CD4-positive, alpha-beta memory T cell (primary cell): ENCODE measurements at regions of chr1 and their contacts with region 1.

Region 1: GRCh38 chr1:95233737-95234500 is at the start of gene RWDD3:
- DNase-seq: peak; percentile 91 to 96 (median 93)
- H3K4me3 ChIP-seq: peak within 1 kb of the TSS; percentile 58 to 81
- H3K4me3 Mint-ChIP-seq: peak within 1 kb of the TSS; percentile 89 to 95 (median 90)
- H3K27ac ChIP-seq: peak within 1 kb of the TSS; percentile 69
- H3K27ac Mint-ChIP-seq: peak within 1 kb of the TSS; percentile 86 to 94 (median 91)
- H3K4me1 ChIP-seq: peaks cover 29% of the 10 kb centered on the region
- H3K4me1 Mint-ChIP-seq: peaks cover 22 to 54% (median 42%) of the 10 kb centered on the region in 4 donors
- H3K27me3 ChIP-seq: no peaks in the 10 kb centered on the region
- H3K27me3 Mint-ChIP-seq: peaks cover 6 to 10% of the 10 kb centered on the region in 2 donors
- total RNA-seq, gene RWDD3: 22.5 to 27.5 TPM

Region 2: DNA sequence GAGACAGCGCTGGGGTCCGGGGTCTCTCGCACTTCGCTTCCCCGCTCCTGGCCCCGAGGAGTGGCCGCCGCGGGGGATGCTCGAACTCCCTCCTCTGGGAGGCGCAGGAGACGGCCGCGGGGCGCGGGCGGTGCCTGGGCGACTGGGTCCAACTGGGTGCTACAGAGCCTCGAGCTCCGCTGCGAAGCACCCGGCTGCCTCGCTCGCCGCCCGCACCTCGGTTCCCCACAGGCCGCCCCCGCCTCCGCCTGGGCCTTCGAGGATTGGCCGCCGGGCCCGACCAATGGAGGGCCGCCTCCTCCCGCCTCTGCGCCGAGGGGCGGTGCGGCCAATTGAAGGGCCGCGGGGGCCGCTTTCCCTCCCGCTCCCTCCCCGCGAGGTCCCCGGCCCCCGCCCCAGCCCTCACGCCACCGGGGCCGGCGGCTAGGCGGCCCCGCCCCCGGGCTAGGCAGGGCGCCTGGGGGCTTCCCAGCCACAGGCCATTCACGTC is 307.0 kb before region 1 on chr1 and contains the start of gene CNN3:
- CTCF ChIA-PET with region 1: interaction called, 3 read pairs
- POLR2A ChIA-PET with region 1: no interaction called
- intact Hi-C with region 1: loop called (anchors 5 kb)
- DNase-seq: peak; percentile 36 to 61 (median 47)
- H3K4me3 ChIP-seq: peak within 1 kb of the TSS in 1 of 2 donors; percentile 35
- H3K4me3 Mint-ChIP-seq: peak within 1 kb of the TSS; percentile 84 to 92 (median 90)
- H3K27ac ChIP-seq: no peak within 1 kb of the TSS
- H3K27ac Mint-ChIP-seq: peak within 1 kb of the TSS in 6 of 7 donors; percentile 5 to 71 (median 60)
- H3K4me1 ChIP-seq: peaks cover 7% of the 10 kb centered on the region
- H3K4me1 Mint-ChIP-seq: peaks cover 9 to 24% (median 17%) of the 10 kb centered on the region in 4 donors
- H3K27me3 ChIP-seq: peaks cover 17% of the 10 kb centered on the region
- H3K27me3 Mint-ChIP-seq: peaks cover 27 to 34% of the 10 kb centered on the region in 2 donors
- total RNA-seq, gene CNN3: 2.6 to 3.2 TPM

Region 3: GRCh38 chr1:95084317-95085176 is 149.4 kb before region 1 on chr1:
- CTCF ChIA-PET with region 1: interaction called, 82 read pairs
- POLR2A ChIA-PET with region 1: interaction called, 9 read pairs
- intact Hi-C with region 1: loop called (anchors 1 kb)
- DNase-seq: peak in 4 of 5 donors; percentile 16 to 34 (median 24)
- H3K4me3 ChIP-seq: no peak overlapping the region
- H3K4me3 Mint-ChIP-seq: no peak overlapping the region
- H3K27ac ChIP-seq: no peak overlapping the region
- H3K27ac Mint-ChIP-seq: no peak overlapping the region
- H3K4me1 ChIP-seq: no peaks in the 10 kb centered on the region
- H3K4me1 Mint-ChIP-seq: peaks cover 0 to 2% (median 0%) of the 10 kb centered on the region in 4 donors
- H3K27me3 ChIP-seq: no peaks in the 10 kb centered on the region
- H3K27me3 Mint-ChIP-seq: peaks cover 8 to 9% of the 10 kb centered on the region in 2 donors

Region 4: DNA sequence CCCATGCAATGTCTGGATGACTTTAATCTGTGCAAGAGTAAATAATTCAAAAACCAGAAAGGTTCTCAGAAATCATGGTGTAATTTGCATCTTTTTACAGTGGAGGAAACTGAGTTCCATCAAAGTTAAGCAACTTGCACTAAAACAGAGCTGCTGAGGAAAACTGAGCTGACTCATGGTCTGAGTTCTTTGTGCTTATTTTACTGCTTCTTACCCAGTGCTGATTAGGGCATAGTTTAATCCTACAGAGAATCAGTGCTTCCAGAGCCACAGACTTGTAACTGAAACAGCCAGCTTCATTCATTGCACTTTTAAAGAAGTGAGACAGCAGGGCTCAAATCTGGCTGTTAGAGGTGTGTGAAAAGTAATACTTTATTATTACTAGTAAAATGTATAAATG is 10.8 kb before region 1 on chr1:
- CTCF ChIA-PET with region 1: interaction called, 11 read pairs
- POLR2A ChIA-PET with region 1: interaction called, 5 read pairs
- intact Hi-C with region 1: no loop called
- DNase-seq: no peak
- H3K4me3 ChIP-seq: no peak overlapping the region
- H3K4me3 Mint-ChIP-seq: no peak overlapping the region
- H3K27ac ChIP-seq: no peak overlapping the region
- H3K27ac Mint-ChIP-seq: no peak overlapping the region
- H3K4me1 ChIP-seq: no peaks in the 10 kb centered on the region
- H3K4me1 Mint-ChIP-seq: no peaks in the 10 kb centered on the region
- H3K27me3 ChIP-seq: no peaks in the 10 kb centered on the region
- H3K27me3 Mint-ChIP-seq: peaks cover 15% of the 10 kb centered on the region in 2 donors

Region 5: DNA sequence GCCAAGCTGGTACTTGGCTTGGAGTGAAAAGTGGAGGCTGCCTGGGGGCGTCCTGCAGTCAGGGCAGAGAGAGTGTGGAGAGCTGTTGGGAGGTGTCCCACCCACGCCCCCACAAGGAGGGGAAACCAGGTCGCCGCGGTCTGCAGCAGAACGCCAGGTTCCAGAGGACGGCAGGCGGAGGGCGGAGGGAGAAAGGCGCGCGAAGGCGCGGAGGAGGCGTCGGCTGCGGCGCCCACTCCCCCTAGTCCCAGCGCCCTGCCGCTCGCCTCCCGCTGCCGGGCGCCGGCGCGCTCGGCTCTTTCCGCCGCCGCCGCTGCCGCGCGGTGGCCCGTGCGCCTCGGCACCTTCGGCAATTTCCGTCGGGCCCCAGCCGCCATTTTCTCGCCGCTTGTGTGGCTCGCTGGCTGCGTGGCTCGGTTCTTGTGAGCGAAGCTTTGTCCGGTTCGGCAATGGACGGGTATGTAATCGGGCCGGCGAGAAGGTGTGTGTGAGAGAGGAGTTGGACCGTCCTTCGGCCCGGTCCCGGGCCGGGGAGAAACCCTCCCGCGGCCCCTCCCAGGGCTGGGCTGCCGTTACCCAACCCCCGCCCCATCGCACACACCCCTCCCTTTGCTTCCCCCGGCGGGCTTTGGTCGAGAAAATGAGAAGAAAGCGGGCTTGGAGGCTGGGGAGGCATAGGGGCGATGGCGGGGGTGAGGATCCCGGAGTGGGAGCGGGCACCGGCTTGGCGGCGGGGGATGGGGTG is 1487.7 kb after region 1 on chr1 and contains the start of gene PTBP2:
- CTCF ChIA-PET with region 1: no interaction called
- POLR2A ChIA-PET with region 1: no interaction called
- intact Hi-C with region 1: loop called (anchors 5 kb)
- DNase-seq: peak; percentile 82 to 89 (median 86)
- H3K4me3 ChIP-seq: peak within 1 kb of the TSS; percentile 83 to 88
- H3K4me3 Mint-ChIP-seq: peak within 1 kb of the TSS; percentile 93 to 99 (median 96)
- H3K27ac ChIP-seq: peak within 1 kb of the TSS; percentile 89
- H3K27ac Mint-ChIP-seq: peak within 1 kb of the TSS; percentile 89 to 97 (median 96)
- H3K4me1 ChIP-seq: peaks cover 25% of the 10 kb centered on the region
- H3K4me1 Mint-ChIP-seq: peaks cover 18 to 37% (median 26%) of the 10 kb centered on the region in 4 donors
- H3K27me3 ChIP-seq: no peaks in the 10 kb centered on the region
- H3K27me3 Mint-ChIP-seq: no peaks in the 10 kb centered on the region
- total RNA-seq, gene PTBP2: 20.6 to 21.0 TPM